ENCODE measurements at regions of chr7 and their contacts with region 1.

Region 1: GRCh38 chr7:1028031-1028770 is 16.1 kb upstream of the GPR146 start:
- DNase-seq: peak; percentile 96 to 97
- ATAC-seq: peak; percentile 93
- H3K4me3 ChIP-seq: peak overlapping the region; percentile 69 to 84
- H3K27ac ChIP-seq: peak overlapping the region; percentile 15 to 77
- H3K4me1 ChIP-seq: no peaks in the 10 kb centered on the region
- H3K27me3 ChIP-seq: no peaks in the 10 kb centered on the region

Region 2: GRCh38 chr7:1044191-1045068 is 16.2 kb after region 1 on chr7 and contains the start of gene GPR146:
- intact Hi-C with region 1: loop called in 1 of 2 experiments (anchors 2 kb)
- DNase-seq: peak; percentile 98 to 99
- ATAC-seq: peak; percentile 99
- H3K4me3 ChIP-seq: peak within 1 kb of the TSS; percentile 41 to 80
- H3K27ac ChIP-seq: peak within 1 kb of the TSS in 1 of 2 donors; percentile 85
- H3K4me1 ChIP-seq: no peaks in the 10 kb centered on the region
- H3K27me3 ChIP-seq: no peaks in the 10 kb centered on the region
- total RNA-seq, gene GPR146: 17.4 to 44.2 TPM